Activated naive CD4-positive, alpha-beta T cell treated with anti-CD3 and anti-CD28 coated beads for 36 hours (primary cell): ENCODE measurements at regions of chr3 and their contacts with region 1.

Region 1: GRCh38 chr3:114290911-114291901 is 2.6 kb upstream of the TIGIT start:
- DNase-seq: peak; percentile 93
- H3K4me3 Mint-ChIP-seq: peak overlapping the region; percentile 33
- H3K27ac Mint-ChIP-seq: peak overlapping the region; percentile 85
- H3K4me1 Mint-ChIP-seq: peaks cover 7% of the 10 kb centered on the region
- H3K27me3 Mint-ChIP-seq: no peaks in the 10 kb centered on the region

Region 2: GRCh38 chr3:114308830-114309229 is 17.6 kb after region 1 on chr3:
- CTCF ChIA-PET with region 1: interaction called, 16 read pairs
- intact Hi-C with region 1: no loop called
- DNase-seq: peak; percentile 57
- H3K4me3 Mint-ChIP-seq: peak overlapping the region; percentile 47
- H3K27ac Mint-ChIP-seq: peak overlapping the region; percentile 89
- H3K4me1 Mint-ChIP-seq: peaks cover 40% of the 10 kb centered on the region
- H3K27me3 Mint-ChIP-seq: no peaks in the 10 kb centered on the region

Region 3: GRCh38 chr3:114319453-114319852 is 28.2 kb after region 1 on chr3:
- CTCF ChIA-PET with region 1: interaction called, 14 read pairs
- intact Hi-C with region 1: no loop called
- DNase-seq: no peak
- H3K4me3 Mint-ChIP-seq: no peak overlapping the region
- H3K27ac Mint-ChIP-seq: no peak overlapping the region
- H3K4me1 Mint-ChIP-seq: peaks cover 36% of the 10 kb centered on the region
- H3K27me3 Mint-ChIP-seq: no peaks in the 10 kb centered on the region

Region 4: DNA sequence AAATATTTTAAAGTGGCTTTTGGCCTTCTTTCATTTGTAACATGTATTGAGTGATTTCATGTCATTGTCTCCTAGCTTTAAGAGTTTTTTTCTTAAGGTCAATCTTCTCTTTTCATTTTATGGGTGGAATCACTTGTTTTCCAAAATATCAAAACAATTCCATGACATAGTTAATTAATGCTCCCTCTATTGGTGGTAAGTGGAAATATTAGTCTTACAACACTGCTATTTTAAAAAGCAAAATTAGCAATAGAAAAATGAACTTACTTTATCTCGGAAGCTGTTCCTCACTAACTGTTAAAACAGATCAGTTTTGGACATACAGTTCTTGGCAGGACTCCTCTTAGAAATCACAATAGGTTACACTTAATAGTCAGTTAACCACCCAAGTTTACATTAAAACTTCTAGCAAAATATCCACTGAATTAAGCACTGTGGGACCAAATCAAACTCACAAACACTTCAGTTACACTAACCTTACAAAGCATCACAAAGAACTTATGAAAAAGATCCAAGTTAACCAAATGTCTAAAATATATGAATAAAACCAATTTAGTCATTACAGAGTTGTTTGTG is 45.0 kb after region 1 on chr3:
- CTCF ChIA-PET with region 1: interaction called, 14 read pairs
- intact Hi-C with region 1: loop called (anchors 1 kb)
- DNase-seq: no peak
- H3K4me3 Mint-ChIP-seq: no peak overlapping the region
- H3K27ac Mint-ChIP-seq: no peak overlapping the region
- H3K4me1 Mint-ChIP-seq: peaks cover 18% of the 10 kb centered on the region
- H3K27me3 Mint-ChIP-seq: no peaks in the 10 kb centered on the region

Region 5: GRCh38 chr3:114362815-114363214 is 71.6 kb after region 1 on chr3:
- CTCF ChIA-PET with region 1: interaction called, 25 read pairs
- intact Hi-C with region 1: loop called (anchors 2 kb)
- DNase-seq: no peak
- H3K4me3 Mint-ChIP-seq: no peak overlapping the region
- H3K27ac Mint-ChIP-seq: no peak overlapping the region
- H3K4me1 Mint-ChIP-seq: peaks cover 2% of the 10 kb centered on the region
- H3K27me3 Mint-ChIP-seq: no peaks in the 10 kb centered on the region

Region 6: GRCh38 chr3:114383875-114384557 is 92.8 kb after region 1 on chr3:
- CTCF ChIA-PET with region 1: interaction called, 12 read pairs
- intact Hi-C with region 1: no loop called
- DNase-seq: peak; percentile 82
- H3K4me3 Mint-ChIP-seq: peak overlapping the region; percentile 70
- H3K27ac Mint-ChIP-seq: peak overlapping the region; percentile 67
- H3K4me1 Mint-ChIP-seq: peaks cover 13% of the 10 kb centered on the region
- H3K27me3 Mint-ChIP-seq: no peaks in the 10 kb centered on the region

Region 7: GRCh38 chr3:114582929-114583328 is 291.7 kb after region 1 on chr3:
- CTCF ChIA-PET with region 1: no interaction called
- intact Hi-C with region 1: no loop called
- DNase-seq: peak; percentile 44
- H3K4me3 Mint-ChIP-seq: no peak overlapping the region
- H3K27ac Mint-ChIP-seq: no peak overlapping the region
- H3K4me1 Mint-ChIP-seq: peaks cover 6% of the 10 kb centered on the region
- H3K27me3 Mint-ChIP-seq: no peaks in the 10 kb centered on the region